Right ventricle myocardium inferior (tissue), 1 donor: ENCODE measurements at regions of chr18 and their contacts with region 1.

Region 1: DNA sequence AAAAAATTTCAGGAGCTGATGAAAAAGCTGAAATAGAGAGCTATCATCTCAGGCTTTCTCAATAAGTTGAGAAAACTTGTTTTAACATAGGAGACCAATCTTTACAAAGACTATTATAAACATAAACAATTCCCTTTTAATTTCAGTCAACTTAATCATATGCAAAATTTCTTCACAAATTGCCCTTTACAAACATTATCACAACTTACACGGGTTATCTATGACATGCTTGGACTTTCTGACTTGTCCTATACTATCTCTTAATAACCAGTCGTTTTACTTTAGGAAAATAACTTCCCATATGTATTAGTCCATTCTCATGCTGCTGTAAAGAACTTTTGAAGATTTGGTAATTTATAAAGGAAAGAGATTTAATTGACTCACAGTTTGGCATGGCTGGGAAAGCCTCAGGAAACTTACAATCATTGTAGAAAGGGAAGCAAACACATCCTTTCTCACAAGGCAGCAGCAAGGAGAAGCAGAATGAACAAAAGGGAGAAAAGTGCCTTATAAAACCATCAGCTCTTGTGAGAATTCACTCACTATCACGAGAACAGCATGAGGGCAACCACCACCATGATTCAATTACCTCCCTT is 1583.7 kb upstream of the CELF4 start:
- DNase-seq: no peak
- ATAC-seq: no peak

Region 2: GRCh38 chr18:39205565-39206195 is 56.4 kb after region 1 on chr18:
- intact Hi-C with region 1: loop called (anchors 10 kb)
- DNase-seq: no peak
- ATAC-seq: no peak